MCF 10A (cell line): ENCODE measurements at regions of chr1 and their contacts with region 1.

Region 1: DNA sequence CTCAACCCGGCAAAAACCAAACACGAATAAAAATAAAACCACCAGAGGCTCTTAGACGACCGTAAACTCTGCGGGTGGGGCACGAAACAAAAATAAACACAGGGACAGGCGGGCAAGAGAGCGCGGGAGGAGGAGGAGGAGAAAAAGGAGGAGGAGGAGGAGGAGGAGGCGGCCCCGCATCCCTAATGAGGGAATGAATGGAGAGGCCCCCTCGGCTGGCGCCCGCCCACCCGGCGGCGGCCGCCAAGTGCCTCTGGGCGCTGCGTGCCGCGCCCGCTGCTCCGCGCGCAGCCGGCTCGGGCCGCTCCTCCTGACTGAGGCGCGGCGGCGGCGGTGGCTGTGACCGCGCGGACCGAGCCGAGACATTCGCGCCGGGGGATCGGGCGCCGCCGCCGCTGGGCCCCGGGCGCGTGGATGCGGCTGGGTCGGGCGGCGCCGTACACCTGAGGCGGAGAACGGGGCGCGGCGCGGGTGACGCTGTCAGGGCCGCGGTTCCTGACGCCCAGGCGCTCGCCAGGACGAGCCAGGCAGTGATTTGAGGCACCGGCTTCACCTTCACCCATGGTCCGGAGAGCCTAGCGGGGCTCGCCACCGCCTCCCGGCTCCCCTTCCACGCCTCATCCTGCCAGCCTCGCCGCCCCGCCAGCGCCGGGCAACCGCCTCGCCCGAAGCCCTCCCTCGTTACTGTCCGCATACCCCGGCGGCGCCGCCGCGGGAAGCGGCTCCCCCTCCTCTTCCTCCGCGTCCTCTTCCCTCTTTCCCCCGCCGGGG is at the start of gene MARK1:
- DNase-seq: peak; percentile 76
- H3K4me3 Mint-ChIP-seq: peak within 1 kb of the TSS; percentile 76
- H3K27ac Mint-ChIP-seq: peak within 1 kb of the TSS; percentile 66
- H3K4me1 Mint-ChIP-seq: peaks cover 21% of the 10 kb centered on the region
- H3K27me3 Mint-ChIP-seq: no peaks in the 10 kb centered on the region
- CTCF ChIP-seq: no peak
- total RNA-seq, gene MARK1: 7.5 and 12.9 TPM in 2 replicates

Region 2: GRCh38 chr1:220300442-220301121 is 227.5 kb before region 1 on chr1:
- CTCF ChIA-PET with region 1: interaction called, 18 read pairs
- POLR2A ChIA-PET with region 1: interaction called, 7 read pairs
- intact Hi-C with region 1: loop called (anchors 1 kb)
- DNase-seq: peak; percentile 91
- H3K4me3 Mint-ChIP-seq: peak overlapping the region; percentile 25
- H3K27ac Mint-ChIP-seq: peak overlapping the region; percentile 85
- H3K4me1 Mint-ChIP-seq: peaks cover 13% of the 10 kb centered on the region
- H3K27me3 Mint-ChIP-seq: no peaks in the 10 kb centered on the region
- CTCF ChIP-seq: no peak

Region 3: DNA sequence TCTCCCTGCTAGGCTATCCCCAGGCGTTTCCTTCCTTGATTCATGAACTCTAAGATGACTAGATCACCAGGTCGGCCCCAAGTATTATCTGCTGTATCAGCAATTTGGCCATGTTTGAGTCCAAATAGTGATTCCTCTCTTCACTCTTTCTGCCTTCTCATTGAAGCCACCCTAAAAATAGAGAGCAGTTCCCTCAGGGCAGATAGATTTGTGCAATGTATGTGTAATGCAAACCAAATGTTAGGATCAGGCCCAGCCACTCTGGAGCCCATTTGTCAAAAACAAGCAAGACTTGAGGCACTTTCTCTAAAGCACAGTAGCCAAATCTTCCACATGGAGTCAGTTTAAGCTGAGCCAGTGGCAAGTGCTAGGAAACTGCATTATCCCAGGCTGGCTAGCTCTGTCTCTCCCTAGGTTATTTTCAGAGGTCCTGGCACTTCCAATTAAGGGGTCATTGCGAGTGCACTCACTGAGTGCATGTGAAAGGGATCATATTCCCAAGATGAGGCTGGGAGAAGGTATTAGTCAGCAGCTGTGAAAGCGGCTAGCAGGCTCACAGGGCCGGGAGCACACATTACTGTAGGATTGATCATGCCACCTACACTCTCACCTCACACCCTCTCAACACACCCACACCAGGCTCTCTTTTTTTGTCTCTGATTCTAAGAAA is 157.9 kb before region 1 on chr1:
- CTCF ChIA-PET with region 1: no interaction called
- POLR2A ChIA-PET with region 1: interaction called, 4 read pairs
- intact Hi-C with region 1: loop called (anchors 2 kb)
- DNase-seq: peak; percentile 98
- H3K4me3 Mint-ChIP-seq: peak overlapping the region; percentile 6
- H3K27ac Mint-ChIP-seq: peak overlapping the region; percentile 65
- H3K4me1 Mint-ChIP-seq: peaks cover 28% of the 10 kb centered on the region
- H3K27me3 Mint-ChIP-seq: no peaks in the 10 kb centered on the region
- CTCF ChIP-seq: no peak

Region 4: GRCh38 chr1:220426989-220427388 is 101.1 kb before region 1 on chr1:
- CTCF ChIA-PET with region 1: no interaction called
- POLR2A ChIA-PET with region 1: interaction called, 4 read pairs
- intact Hi-C with region 1: loop called (anchors 5 kb)
- DNase-seq: peak; percentile 98
- H3K4me3 Mint-ChIP-seq: peak overlapping the region; percentile 22
- H3K27ac Mint-ChIP-seq: peak overlapping the region; percentile 75
- H3K4me1 Mint-ChIP-seq: peaks cover 33% of the 10 kb centered on the region
- H3K27me3 Mint-ChIP-seq: no peaks in the 10 kb centered on the region
- CTCF ChIP-seq: no peak

Region 5: GRCh38 chr1:220516014-220516721 is 11.9 kb before region 1 on chr1:
- CTCF ChIA-PET with region 1: interaction called, 16 read pairs
- POLR2A ChIA-PET with region 1: interaction called, 21 read pairs
- intact Hi-C with region 1: no loop called
- DNase-seq: peak; percentile 19
- H3K4me3 Mint-ChIP-seq: no peak overlapping the region
- H3K27ac Mint-ChIP-seq: no peak overlapping the region
- H3K4me1 Mint-ChIP-seq: peaks cover 23% of the 10 kb centered on the region
- H3K27me3 Mint-ChIP-seq: no peaks in the 10 kb centered on the region
- CTCF ChIP-seq: no peak

Region 6: DNA sequence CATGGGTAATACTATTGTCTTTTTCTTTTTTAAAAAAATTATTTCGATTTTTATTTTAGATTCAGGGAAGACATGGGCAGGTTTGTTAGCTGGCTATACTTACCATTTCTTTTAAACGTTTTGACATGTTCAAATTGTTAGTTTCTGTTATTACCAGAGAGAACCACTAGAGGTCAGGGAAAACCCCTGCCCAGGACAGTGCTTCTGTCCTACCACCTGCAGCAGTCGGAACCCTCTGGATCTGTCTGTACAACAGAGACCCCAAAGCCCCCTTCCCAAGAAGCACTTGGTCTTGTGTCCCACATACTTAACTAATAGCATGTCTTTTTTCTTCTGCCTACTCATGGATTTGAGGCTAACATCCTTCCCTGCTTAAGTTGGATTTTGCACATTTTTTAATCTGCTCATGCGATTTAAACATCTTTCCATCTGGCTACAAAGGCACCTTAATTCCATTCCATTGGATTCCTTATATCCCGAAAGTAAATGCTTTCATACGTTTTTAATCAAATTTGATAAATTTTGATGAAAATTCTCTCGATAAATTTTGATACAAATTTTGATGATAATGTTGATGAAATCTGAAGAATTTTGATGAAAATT is 152.1 kb after region 1 on chr1:
- CTCF ChIA-PET with region 1: no interaction called
- POLR2A ChIA-PET with region 1: no interaction called
- intact Hi-C with region 1: loop called (anchors 1 kb)
- DNase-seq: peak; percentile 75
- H3K4me3 Mint-ChIP-seq: no peak overlapping the region
- H3K27ac Mint-ChIP-seq: no peak overlapping the region
- H3K4me1 Mint-ChIP-seq: peaks cover 7% of the 10 kb centered on the region
- H3K27me3 Mint-ChIP-seq: no peaks in the 10 kb centered on the region
- CTCF ChIP-seq: peak; percentile 95